ENCODE measurements at regions of chr4 and their contacts with region 1.

Region 1: GRCh38 chr4:122758033-122758432 is 25.5 kb downstream of the BBS12 start:
- DNase-seq: no peak
- ATAC-seq: peak; percentile 51
- H3K4me3 Mint-ChIP-seq: no peak overlapping the region
- H3K27ac Mint-ChIP-seq: no peak overlapping the region
- H3K4me1 Mint-ChIP-seq: peaks cover 16% of the 10 kb centered on the region
- H3K27me3 Mint-ChIP-seq: peaks cover 12% of the 10 kb centered on the region
- CTCF ChIP-seq: peak; percentile 82

Region 2: DNA sequence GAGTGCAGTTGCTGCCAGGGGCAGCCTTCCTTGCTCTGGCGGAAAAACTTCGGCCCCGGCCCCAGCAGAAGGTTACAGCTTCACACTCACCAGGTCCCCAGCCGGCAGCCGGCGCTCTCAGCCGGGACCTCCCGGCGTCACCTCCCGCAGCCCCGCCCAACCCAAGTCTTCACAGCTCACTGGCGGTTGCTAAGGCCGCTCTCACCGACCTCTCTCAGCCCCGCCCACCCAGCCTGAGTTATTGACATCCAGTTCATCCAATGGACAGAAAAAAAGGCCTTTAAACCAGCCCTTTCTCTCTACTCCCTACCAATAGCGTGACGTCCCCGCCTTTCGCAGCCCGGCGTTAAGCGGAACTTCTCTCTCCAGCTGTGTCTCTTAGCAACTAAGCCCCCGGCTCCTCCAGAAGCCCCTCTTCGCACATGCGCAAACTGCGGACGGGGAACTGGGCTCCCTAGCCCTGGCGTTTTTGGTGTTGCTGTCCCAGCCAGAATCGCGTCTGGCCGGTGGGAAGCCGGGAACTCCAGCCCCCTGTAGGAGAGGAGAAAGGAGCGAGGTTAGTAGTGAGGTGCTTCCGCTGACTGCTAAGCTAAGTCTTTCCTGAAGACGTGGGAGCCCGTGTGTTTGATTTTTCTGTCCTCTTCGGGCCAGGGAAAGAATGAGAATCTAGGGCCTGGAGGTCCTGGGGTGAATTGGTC is 25.6 kb before region 1 on chr4 and contains the start of gene BBS12:
- CTCF ChIA-PET with region 1: interaction called, 21 read pairs
- POLR2A ChIA-PET with region 1: no interaction called
- intact Hi-C with region 1: no loop called
- DNase-seq: peak; percentile 99
- ATAC-seq: peak; percentile 99
- H3K4me3 Mint-ChIP-seq: peak within 1 kb of the TSS; percentile 94
- H3K27ac Mint-ChIP-seq: peak within 1 kb of the TSS; percentile 91
- H3K4me1 Mint-ChIP-seq: peaks cover 11% of the 10 kb centered on the region
- H3K27me3 Mint-ChIP-seq: no peaks in the 10 kb centered on the region
- CTCF ChIP-seq: no peak
- total RNA-seq, gene BBS12: 0.74 to 0.89 TPM

Region 3: DNA sequence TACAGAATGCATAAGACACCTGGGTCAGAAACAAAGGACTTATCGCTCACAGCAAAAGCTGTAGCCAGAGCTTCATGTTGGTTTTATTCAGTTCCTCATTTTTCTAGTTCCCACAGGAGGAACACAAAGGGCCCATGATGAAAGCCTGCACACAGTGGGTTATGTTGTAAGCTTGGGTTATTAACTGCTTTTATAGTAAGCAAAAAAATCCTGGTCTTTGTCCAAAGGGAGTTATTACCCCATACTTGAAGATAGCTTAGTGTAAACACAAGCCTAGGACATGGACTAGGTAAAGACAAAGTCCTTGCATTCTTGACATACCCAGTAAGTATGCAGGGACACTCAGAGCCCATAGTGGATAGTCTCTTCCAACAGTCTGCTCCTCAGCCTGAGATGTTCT is 13.8 kb before region 1 on chr4:
- CTCF ChIA-PET with region 1: interaction called, 28 read pairs
- POLR2A ChIA-PET with region 1: no interaction called
- intact Hi-C with region 1: no loop called
- DNase-seq: no peak
- ATAC-seq: no peak
- H3K4me3 Mint-ChIP-seq: no peak overlapping the region
- H3K27ac Mint-ChIP-seq: no peak overlapping the region
- H3K4me1 Mint-ChIP-seq: peaks cover 7% of the 10 kb centered on the region
- H3K27me3 Mint-ChIP-seq: no peaks in the 10 kb centered on the region
- CTCF ChIP-seq: no peak

Region 4: GRCh38 chr4:122914292-122914904 is 156.4 kb after region 1 on chr4:
- CTCF ChIA-PET with region 1: interaction called, 19 read pairs
- POLR2A ChIA-PET with region 1: no interaction called
- intact Hi-C with region 1: no loop called
- DNase-seq: no peak
- ATAC-seq: no peak
- H3K4me3 Mint-ChIP-seq: no peak overlapping the region
- H3K27ac Mint-ChIP-seq: no peak overlapping the region
- H3K4me1 Mint-ChIP-seq: no peaks in the 10 kb centered on the region
- H3K27me3 Mint-ChIP-seq: no peaks in the 10 kb centered on the region
- CTCF ChIP-seq: no peak

Region 5: GRCh38 chr4:122922877-122923511 is 165.0 kb after region 1 on chr4:
- CTCF ChIA-PET with region 1: interaction called, 38 read pairs
- POLR2A ChIA-PET with region 1: no interaction called
- intact Hi-C with region 1: loop called (anchors 2 kb)
- DNase-seq: peak; percentile 94
- ATAC-seq: peak; percentile 97
- H3K4me3 Mint-ChIP-seq: no peak overlapping the region
- H3K27ac Mint-ChIP-seq: peak overlapping the region; percentile 96
- H3K4me1 Mint-ChIP-seq: peaks cover 12% of the 10 kb centered on the region
- H3K27me3 Mint-ChIP-seq: no peaks in the 10 kb centered on the region
- CTCF ChIP-seq: no peak

Region 6: DNA sequence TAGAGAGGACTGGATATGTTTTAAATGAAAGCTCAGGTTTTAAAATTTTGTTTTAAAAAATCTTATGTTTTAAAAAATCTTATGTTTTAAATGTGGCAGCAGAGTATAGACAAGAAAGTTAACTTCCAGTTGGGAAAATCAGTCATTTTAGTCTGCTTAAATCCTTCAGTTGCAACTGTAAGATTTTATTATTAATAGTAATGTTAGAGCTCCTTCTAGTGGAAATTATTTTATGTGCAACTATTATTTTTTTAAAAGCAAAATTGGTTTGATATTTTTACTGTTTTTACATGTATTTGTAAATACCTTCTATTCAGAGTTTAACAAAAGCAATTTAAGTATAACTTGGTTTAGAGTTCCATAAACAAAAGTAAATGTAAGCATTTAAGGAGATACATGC is 172.8 kb after region 1 on chr4:
- CTCF ChIA-PET with region 1: interaction called, 38 read pairs
- POLR2A ChIA-PET with region 1: no interaction called
- intact Hi-C with region 1: no loop called
- DNase-seq: no peak
- ATAC-seq: no peak
- H3K4me3 Mint-ChIP-seq: no peak overlapping the region
- H3K27ac Mint-ChIP-seq: no peak overlapping the region
- H3K4me1 Mint-ChIP-seq: peaks cover 6% of the 10 kb centered on the region
- H3K27me3 Mint-ChIP-seq: no peaks in the 10 kb centered on the region
- CTCF ChIP-seq: peak; percentile 70

Region 7: DNA sequence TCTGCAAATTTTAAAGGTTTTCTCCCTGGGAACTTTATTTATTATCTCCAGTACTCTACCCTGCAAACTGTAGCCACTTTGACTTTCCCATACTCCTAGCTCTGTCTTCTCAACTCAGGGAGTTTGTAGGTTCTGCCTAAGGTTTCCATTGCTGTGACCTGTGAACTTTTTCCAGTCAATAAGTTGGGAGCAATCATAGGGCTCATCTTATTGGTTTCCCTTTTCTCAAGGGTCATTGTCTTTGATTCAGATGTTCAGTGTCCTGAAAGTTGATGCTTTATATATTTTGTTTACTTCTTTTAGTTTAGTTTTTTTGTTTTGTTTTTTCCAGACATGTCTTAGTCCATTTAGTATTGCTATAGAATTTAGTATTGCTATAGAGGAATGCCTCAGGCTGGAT is 249.6 kb after region 1 on chr4:
- CTCF ChIA-PET with region 1: no interaction called
- POLR2A ChIA-PET with region 1: no interaction called
- intact Hi-C with region 1: no loop called
- DNase-seq: no peak
- ATAC-seq: no peak
- H3K4me3 Mint-ChIP-seq: no peak overlapping the region
- H3K27ac Mint-ChIP-seq: no peak overlapping the region
- H3K4me1 Mint-ChIP-seq: peaks cover 7% of the 10 kb centered on the region
- H3K27me3 Mint-ChIP-seq: no peaks in the 10 kb centered on the region
- CTCF ChIP-seq: no peak

Measured in activated CD8-positive, alpha-beta T cell treated with anti-CD3 and anti-CD28 coated beads for 36 hours (primary cell).